T47D (cell line): ENCODE measurements at regions of chr11 and their contacts with region 1.

Region 1: DNA sequence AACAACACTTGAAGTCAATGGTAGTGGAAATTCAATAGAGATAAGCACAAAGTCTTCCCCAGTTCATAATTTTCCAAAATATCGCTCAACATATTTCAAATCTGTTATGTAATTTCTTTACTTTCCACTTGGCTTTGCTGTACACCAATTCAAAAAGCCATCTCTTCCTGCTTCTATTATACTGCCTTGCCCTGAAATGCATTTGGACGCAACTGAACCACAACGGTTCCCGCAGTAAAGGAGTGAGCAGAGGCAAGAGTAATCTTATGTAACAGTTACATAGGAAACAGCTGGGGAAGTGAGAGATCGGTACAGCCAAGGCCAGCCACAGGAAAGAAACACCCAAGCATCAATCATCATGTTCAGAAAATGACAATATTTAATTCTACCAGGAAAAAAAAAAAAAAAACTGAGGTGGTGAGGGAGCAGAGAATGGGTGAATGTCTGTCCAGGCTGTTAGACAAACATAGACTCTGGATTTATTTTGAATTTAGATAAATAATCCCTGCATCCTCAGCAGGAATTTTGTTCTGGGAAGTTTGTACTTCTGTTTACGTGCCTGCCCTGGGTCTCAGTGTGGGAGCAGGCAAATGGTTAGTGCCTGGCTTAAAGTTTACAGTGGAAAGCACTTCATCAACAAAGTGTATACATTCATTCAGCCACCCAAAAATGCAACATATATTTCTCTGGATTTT is 392.2 kb downstream of the ETS1 start:
- DNase-seq: peak in 1 of 2 experiments; percentile 38

Region 2: GRCh38 chr11:128021349-128022006 is 173.7 kb before region 1 on chr11:
- in situ Hi-C with region 1: no loop called
- DNase-seq: peak in 1 of 2 experiments; percentile 48

Region 3: DNA sequence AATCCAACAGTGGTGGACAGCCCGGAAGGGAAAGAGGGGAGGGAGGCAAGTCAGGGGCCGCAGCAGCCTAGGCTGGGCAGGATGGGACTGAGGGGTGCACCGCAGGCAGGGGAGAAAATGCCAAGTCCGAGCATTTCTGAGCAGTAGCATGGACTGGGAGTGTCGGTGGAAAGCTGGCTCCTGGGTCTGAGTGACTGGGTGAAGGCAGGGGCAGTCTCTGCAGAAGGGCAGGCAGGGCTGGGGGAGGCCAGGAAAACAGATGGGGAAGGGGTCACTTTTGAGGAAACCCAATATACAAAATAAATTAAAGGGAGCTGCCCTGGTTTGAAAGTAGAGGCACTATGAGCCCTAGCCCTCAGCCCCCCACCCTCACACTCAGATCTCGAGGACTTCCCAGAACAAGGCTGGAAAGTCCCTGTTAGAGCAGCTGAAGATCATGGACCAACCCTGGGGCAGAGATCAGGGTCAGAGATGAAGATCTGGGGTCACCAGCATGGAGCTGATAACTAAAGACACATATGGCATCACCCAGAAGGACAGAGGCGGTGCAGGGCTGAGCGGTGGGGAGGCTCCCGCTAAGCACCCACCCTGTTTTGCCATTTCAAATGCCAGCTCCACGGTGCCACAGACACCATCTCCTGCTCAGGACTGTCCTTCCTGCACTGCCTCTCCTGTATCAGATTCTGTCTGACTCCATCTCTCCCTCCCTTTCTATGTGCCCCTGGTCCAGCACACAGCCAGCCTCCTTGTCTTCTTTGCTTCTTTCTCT is 424.5 kb after region 1 on chr11:
- in situ Hi-C with region 1: no loop called
- DNase-seq: no peak

Region 4: DNA sequence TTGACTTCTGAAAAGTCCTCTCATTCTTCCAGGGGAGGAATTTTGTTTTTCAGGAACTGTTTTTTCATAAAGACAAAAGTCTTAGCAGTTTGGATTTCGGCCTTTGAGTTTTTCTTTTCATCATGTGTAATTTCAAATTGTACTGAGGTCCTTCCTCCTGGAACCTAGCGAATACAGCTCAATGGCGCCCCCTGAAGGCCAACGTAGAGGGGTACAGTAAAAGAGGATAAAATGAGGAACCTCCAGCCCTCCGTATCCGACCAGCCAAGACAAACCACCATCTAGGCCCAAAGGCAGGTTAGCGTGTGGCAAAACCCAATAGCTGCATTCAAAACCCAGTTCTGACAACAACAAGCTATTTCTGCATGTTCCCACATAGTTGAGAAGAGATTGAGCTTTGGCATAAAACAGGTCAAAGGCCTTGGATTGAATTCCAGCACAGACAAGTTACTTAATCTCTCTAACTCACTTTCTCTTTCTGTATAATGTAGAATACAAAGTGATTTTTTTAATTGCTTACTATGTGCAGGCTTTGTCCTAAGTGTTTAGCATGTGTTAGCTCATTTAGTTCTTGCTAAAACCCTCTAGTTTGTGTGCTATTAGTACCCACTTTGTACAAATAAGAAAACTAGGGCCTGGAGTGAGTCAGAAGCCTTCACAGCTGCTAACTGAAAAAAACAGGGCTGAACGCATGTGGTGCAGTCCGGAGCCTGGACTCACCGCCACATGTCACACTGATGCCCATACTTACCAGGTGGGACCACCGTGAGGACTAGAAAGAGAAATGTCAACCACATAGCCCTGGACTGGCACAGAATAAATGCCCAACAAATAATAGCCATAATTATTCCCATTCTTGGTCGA is 435.4 kb after region 1 on chr11:
- in situ Hi-C with region 1: loop called (anchors 25 kb)
- DNase-seq: peak; percentile 83 to 90